ENCODE measurements at regions of chr9 and their contacts with region 1.

Region 1: DNA sequence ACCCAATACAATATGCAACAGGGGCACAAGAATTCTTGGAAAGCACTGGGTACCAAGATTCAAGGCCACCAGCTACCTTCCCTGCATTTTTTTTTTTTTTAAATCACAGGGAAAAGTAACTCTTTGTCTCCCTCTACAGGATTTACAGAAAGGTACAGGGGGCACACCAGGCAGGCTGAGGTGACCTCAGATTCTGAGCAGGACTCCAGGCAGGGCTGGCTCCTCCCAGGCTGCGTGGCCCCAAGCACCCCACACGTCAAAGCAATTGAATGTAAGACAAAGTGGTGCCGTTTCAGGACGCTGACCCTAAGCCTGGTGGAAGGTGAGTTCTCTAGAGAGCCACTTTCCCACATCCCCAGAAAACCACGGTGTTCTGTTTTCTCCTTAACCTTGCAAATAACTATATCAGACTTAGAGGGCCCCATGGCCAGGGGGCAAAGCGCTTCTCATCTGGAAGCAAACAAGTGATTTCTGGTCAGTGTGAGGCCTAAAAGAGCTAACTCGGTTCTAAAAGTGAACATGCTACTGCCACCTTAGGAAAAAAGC is 222.6 kb downstream of the ROR2 start:
- DNase-seq: peak; percentile 50
- H3K4me3 ChIP-seq: no peak overlapping the region
- H3K27ac ChIP-seq: no peak overlapping the region
- H3K4me1 ChIP-seq: no peaks in the 10 kb centered on the region
- H3K27me3 ChIP-seq: no peaks in the 10 kb centered on the region
- CTCF ChIP-seq: peak; percentile 62 to 64
- POLR2A ChIP-seq: no peak

Region 2: DNA sequence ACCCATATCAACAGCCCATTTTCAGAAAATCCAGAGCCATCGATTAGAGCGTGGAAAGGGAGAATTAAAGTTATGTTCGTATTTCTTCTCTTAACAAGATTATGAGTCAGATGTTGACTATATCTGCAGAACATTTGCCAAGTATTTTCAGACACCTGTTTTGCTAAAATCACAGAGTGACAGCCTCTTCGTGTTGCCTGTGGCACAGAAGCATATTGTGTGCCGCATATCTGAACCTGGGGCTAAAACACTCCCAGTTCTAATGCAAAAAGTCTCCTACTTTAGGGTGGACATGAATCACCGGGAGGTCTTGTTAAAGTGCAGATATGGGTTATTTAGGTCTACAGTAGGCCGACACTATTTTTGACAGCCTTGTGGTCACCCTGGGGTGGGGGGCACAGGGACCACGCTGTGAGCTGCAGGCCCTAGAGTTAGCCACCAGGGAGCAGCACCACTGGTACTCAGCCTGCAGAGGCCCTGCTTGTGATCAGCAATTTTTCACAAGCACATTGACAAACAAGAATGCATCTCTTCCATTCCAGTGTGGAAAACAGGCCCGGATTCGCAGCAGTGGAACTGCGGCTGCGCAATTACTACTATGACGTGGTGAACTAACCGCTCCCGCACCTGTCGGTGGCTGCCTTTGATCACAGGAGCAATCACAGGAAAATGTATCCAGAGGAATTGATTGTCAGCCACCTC is 832.3 kb before region 1 on chr9:
- CTCF ChIA-PET with region 1: interaction called, 13 read pairs
- POLR2A ChIA-PET with region 1: no interaction called
- dilution Hi-C with region 1: no loop called
- intact Hi-C with region 1: no loop called
- DNase-seq: peak; percentile 9
- H3K4me3 ChIP-seq: no peak overlapping the region
- H3K27ac ChIP-seq: no peak overlapping the region
- H3K4me1 ChIP-seq: no peaks in the 10 kb centered on the region
- H3K27me3 ChIP-seq: peaks cover 2 to 8% of the 10 kb centered on the region in 2 experiments
- CTCF ChIP-seq: peak; percentile 29 to 74
- POLR2A ChIP-seq: no peak

Region 3: GRCh38 chr9:90975781-90976538 is 751.4 kb before region 1 on chr9:
- CTCF ChIA-PET with region 1: no interaction called
- POLR2A ChIA-PET with region 1: no interaction called
- dilution Hi-C with region 1: no loop called
- intact Hi-C with region 1: loop called (anchors 2 kb)
- DNase-seq: no peak
- H3K4me3 ChIP-seq: no peak overlapping the region
- H3K27ac ChIP-seq: no peak overlapping the region
- H3K4me1 ChIP-seq: no peaks in the 10 kb centered on the region
- H3K27me3 ChIP-seq: no peaks in the 10 kb centered on the region
- CTCF ChIP-seq: no peak
- POLR2A ChIP-seq: no peak

Region 4: DNA sequence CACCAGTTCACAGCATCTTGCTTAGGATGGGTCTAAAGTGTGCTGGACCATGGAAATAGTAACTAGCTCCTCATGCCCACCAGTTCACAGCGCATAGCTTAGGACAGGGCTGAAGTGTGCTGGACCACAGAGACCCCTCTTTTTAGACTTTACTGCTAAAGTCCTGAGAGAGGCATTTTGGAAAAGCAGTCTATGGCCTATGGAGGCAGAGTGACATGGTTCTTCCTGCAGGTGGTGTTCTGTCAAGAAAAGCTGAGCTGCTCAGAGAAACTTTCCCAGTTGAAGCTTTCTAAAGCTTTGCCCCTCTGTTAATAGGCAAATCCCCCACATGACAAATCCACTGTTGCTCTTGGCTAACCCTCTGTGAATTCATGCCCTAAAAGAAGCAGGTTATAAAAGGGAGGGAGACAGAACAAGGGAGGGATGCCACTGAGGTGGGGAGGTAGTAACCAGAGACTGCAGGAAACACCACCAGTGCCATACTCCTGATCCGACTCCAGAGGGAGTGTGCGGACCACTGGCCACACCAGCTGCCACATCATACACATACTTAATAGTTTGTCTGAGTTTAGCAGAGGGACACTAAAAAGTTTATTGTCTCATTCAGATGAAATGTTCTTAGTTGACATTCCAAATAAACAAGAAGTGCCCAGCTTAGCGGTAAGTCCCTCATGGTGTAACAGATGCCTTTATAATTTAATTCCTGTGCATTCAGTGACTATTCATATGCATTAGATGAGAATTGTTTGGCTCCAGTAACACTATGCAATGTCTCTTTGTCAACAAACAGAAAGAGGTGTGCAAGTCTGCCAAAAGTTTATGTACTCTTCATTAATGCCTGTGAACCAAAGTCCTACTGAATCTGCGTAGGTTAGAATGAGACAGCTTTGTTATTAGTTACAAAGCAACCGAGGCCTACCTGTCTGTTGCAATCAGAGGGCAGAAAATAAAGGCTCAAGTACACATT is 67.6 kb before region 1 on chr9:
- CTCF ChIA-PET with region 1: interaction called, 15 read pairs
- POLR2A ChIA-PET with region 1: no interaction called
- dilution Hi-C with region 1: no loop called
- intact Hi-C with region 1: loop called (anchors 2 kb)
- DNase-seq: no peak
- H3K4me3 ChIP-seq: no peak overlapping the region
- H3K27ac ChIP-seq: no peak overlapping the region
- H3K4me1 ChIP-seq: no peaks in the 10 kb centered on the region
- H3K27me3 ChIP-seq: no peaks in the 10 kb centered on the region
- CTCF ChIP-seq: peak; percentile 35 to 37
- POLR2A ChIP-seq: no peak

Measured in endothelial cell of umbilical vein (primary cell).